Endothelial cell of umbilical vein (primary cell): ENCODE measurements at regions of chr13 and their contacts with region 1.

Region 1: DNA sequence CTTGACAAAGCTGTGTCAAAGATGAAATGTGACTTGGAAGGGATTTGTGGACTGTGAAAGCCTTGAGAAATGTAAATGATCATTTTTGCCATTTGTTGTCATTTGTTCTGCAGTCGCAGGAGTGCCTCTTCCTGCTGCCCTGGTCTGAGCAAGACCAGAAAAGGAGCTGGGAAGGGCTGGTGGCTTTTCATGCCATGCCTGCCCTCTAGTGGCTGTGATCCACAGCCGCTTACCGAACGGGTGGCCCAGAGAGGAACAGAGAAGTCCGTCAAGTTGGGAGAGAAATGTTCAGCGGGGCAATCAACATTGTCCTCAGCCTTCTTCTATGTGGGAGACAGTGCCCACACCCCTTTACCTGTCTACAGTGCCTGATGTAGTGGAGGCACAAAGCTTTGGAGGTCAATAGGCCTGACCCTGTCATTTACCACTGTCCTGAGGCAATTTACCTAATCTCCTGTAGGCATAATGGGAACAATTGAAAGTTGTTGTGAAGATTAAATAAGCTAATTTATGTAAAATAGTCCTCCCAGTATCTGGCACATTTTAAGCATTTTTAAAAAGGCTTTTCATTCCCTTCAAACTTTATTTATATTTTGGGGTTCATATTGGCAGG is 224.4 kb downstream of the B3GLCT start:
- DNase-seq: peak; percentile 82
- H3K4me3 ChIP-seq: no peak overlapping the region
- H3K27ac ChIP-seq: no peak overlapping the region
- H3K4me1 ChIP-seq: peaks cover 7% of the 10 kb centered on the region
- H3K27me3 ChIP-seq: peaks cover 6 to 12% of the 10 kb centered on the region in 2 experiments
- CTCF ChIP-seq: peak; percentile 90 to 95
- POLR2A ChIP-seq: no peak

Region 2: DNA sequence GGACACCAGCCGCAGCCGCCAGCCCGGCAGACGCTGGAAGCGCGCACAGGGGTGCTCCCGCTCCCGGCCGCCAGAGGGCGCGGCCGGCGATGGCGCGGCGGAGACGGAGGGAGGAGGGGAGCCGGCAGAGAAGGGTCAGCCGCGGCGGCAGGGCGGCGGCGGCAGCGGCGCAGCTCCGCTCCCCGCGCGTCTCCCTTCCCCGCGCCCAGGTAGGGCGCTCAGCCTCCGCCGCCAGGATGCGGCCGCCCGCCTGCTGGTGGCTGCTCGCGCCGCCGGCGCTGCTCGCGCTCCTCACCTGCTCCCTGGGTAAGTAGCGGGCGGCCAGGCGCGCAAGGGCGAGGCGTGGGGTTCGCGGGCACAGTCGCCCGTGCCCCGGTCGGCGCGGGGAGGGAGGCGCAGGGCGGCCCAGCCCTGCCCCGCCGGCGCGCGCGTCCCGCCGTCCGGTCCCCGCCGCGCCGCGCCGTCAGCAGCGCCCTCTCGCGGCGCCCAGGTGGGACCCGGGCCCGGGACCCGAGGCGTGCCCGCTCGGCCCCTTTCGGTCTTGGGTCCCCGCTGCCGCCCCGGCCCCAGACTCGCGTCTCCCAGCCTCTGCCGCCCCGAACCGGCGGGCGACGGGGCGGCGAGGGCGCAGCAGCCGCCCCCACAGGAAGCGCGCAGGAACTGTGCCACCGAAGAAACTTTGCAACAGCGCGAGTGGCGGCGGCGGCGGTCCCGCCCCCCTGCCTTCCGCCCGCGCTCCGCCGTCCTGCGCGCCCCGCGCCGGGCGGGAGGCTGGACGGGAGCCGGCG is 224.2 kb before region 1 on chr13 and contains the start of gene B3GLCT:
- CTCF ChIA-PET with region 1: interaction called, 14 read pairs
- POLR2A ChIA-PET with region 1: no interaction called
- dilution Hi-C with region 1: no loop called
- intact Hi-C with region 1: loop called (anchors 1 kb)
- DNase-seq: peak; percentile 75
- H3K4me3 ChIP-seq: peak within 1 kb of the TSS; percentile 66 to 87 (median 83)
- H3K27ac ChIP-seq: peak within 1 kb of the TSS; percentile 83
- H3K4me1 ChIP-seq: peaks cover 17% of the 10 kb centered on the region
- H3K27me3 ChIP-seq: no peaks in the 10 kb centered on the region
- CTCF ChIP-seq: peak; percentile 84 to 85
- POLR2A ChIP-seq: peak; percentile 39
- total RNA-seq, gene B3GLCT: 13.9 and 14.6 TPM in 2 replicates

Region 3: DNA sequence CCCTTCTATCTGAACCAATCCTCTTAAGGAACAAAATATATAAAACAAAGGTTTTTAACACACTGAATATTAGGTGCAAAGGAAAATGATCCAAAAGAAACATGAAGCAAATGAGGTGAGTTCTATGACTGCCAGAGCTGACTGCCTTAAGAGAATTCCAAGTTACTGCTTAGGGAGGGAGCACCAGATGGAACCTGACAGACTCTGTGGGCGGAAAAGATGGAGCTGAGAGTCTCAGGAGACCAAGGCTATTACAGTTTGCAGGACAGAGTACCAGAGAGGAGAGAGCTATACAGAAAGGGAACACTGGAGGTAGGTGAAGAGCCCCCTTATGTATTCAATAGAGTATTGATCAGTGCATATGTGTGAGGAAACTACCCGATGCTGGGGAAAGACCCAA is 137.3 kb before region 1 on chr13:
- CTCF ChIA-PET with region 1: no interaction called
- POLR2A ChIA-PET with region 1: no interaction called
- dilution Hi-C with region 1: no loop called
- intact Hi-C with region 1: loop called (anchors 1 kb)
- DNase-seq: no peak
- H3K4me3 ChIP-seq: no peak overlapping the region
- H3K27ac ChIP-seq: no peak overlapping the region
- H3K4me1 ChIP-seq: peaks cover 6% of the 10 kb centered on the region
- H3K27me3 ChIP-seq: no peaks in the 10 kb centered on the region
- CTCF ChIP-seq: no peak
- POLR2A ChIP-seq: no peak

Region 4: DNA sequence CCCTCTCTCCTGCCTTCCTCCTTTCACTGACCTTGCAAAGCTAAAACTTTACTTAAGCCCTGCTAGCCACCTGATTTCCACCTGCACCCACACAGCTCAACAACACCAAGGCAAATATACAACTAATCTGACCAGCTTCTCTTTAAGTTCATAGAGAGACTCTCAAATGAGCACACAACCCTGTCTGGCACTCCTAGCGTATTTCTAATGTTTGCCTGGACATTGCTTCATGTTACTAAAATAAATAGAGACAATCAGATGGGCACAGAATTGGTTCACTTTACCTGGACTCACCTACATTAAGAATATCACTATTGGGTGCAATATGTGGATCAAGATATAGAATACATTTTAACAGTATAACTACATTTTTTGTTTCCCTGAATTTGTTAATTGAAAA is 281.9 kb after region 1 on chr13:
- CTCF ChIA-PET with region 1: no interaction called
- POLR2A ChIA-PET with region 1: no interaction called
- dilution Hi-C with region 1: no loop called
- intact Hi-C with region 1: no loop called
- DNase-seq: no peak
- H3K4me3 ChIP-seq: no peak overlapping the region
- H3K27ac ChIP-seq: no peak overlapping the region
- H3K4me1 ChIP-seq: no peaks in the 10 kb centered on the region
- H3K27me3 ChIP-seq: peaks cover 16 to 24% of the 10 kb centered on the region in 2 experiments
- CTCF ChIP-seq: no peak
- POLR2A ChIP-seq: no peak

Region 5: GRCh38 chr13:31742097-31742734 is 318.0 kb after region 1 on chr13:
- CTCF ChIA-PET with region 1: interaction called, 13 read pairs
- POLR2A ChIA-PET with region 1: no interaction called
- dilution Hi-C with region 1: no loop called
- intact Hi-C with region 1: no loop called
- DNase-seq: peak; percentile 64
- H3K4me3 ChIP-seq: no peak overlapping the region
- H3K27ac ChIP-seq: no peak overlapping the region
- H3K4me1 ChIP-seq: no peaks in the 10 kb centered on the region
- H3K27me3 ChIP-seq: peaks cover 0 to 2% of the 10 kb centered on the region in 2 experiments
- CTCF ChIP-seq: peak; percentile 88 to 95
- POLR2A ChIP-seq: no peak